ENCODE measurements at regions of chr7 and their contacts with region 1.

Region 1: GRCh38 chr7:45863715-45864114 is 9.2 kb downstream of the CCDC201 start:
- DNase-seq: no peak
- ATAC-seq: no peak

Region 2: GRCh38 chr7:45160417-45160881 is 703.3 kb before region 1 on chr7:
- intact Hi-C with region 1: loop called (anchors 10 kb)
- DNase-seq: no peak
- ATAC-seq: peak; percentile 11

Measured in left ventricle myocardium superior (tissue), 1 donor.